CD8-positive, alpha-beta T cell (primary cell): ENCODE measurements at regions of chr17 and their contacts with region 1.

Region 1: GRCh38 chr17:49624896-49625295 is 49.2 kb downstream of the NXPH3 start:
- DNase-seq: no peak
- ATAC-seq: no peak
- H3K4me3 ChIP-seq: no peak overlapping the region
- H3K4me3 Mint-ChIP-seq: no peak overlapping the region
- H3K27ac ChIP-seq: no peak overlapping the region
- H3K27ac Mint-ChIP-seq: no peak overlapping the region
- H3K4me1 ChIP-seq: peaks cover 10% of the 10 kb centered on the region
- H3K4me1 Mint-ChIP-seq: peaks cover 37% of the 10 kb centered on the region
- H3K27me3 ChIP-seq: no peaks in the 10 kb centered on the region
- H3K27me3 Mint-ChIP-seq: no peaks in the 10 kb centered on the region
- CTCF ChIP-seq: no peak

Region 2: DNA sequence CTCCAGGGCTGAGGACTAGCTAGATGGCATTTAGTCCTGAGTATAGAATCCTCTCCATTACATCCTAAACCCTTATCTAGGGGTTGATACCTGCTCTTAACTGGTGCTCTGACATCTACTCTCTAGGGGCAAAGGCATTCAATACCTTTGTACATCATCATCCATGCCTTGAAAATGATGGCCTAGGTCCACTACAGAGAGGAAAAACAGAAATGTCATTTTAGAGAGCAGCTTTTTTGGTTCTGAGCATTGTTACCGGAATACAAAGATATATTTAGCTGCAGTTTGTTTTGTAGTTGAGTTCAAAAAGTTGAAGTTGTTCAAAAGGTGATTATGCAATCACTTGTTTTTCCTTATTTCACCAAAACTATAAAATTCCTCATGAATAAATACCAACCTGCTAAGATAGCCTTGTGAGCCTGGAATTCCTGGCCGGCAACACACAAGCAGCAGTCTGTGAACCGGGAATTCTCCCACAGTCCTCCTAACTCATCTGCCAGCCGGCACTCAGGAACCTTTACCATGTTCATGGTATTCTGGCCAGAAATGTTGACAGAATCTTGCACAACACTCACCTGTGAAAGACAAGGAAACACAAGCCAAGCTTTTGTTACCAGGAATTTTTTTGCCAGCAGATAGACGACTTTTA is 13.9 kb before region 1 on chr17:
- CTCF ChIA-PET with region 1: no interaction called
- POLR2A ChIA-PET with region 1: no interaction called
- intact Hi-C with region 1: no loop called
- DNase-seq: no peak
- ATAC-seq: no peak
- H3K4me3 ChIP-seq: no peak overlapping the region
- H3K4me3 Mint-ChIP-seq: no peak overlapping the region
- H3K27ac ChIP-seq: no peak overlapping the region
- H3K27ac Mint-ChIP-seq: peak overlapping the region; percentile 67
- H3K4me1 ChIP-seq: no peaks in the 10 kb centered on the region
- H3K4me1 Mint-ChIP-seq: peaks cover 2% of the 10 kb centered on the region
- H3K27me3 ChIP-seq: no peaks in the 10 kb centered on the region
- H3K27me3 Mint-ChIP-seq: no peaks in the 10 kb centered on the region
- CTCF ChIP-seq: no peak

Region 3: DNA sequence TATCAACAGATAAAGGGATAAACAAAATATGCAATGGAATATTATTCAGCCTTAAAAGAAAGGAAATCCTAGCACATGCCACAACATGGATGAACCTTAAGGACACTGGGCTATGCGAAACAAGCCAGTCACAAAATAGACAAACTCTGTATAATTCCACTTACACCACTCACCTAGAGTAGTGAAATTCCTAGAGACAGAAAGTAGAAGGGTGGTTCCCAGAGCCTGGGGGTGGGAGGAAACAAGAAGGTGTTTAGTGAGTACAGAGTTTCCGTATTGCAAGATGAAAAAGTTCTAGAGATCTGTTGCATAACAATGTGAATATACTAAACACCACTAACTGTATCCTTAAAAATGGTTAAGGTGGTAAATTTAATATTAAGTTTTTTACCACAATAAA is 43.0 kb after region 1 on chr17:
- CTCF ChIA-PET with region 1: no interaction called
- POLR2A ChIA-PET with region 1: no interaction called
- intact Hi-C with region 1: loop called in 1 of 2 experiments (anchors 5 kb)
- DNase-seq: peak in 1 of 9 experiments; percentile 40
- ATAC-seq: no peak
- H3K4me3 ChIP-seq: no peak overlapping the region
- H3K4me3 Mint-ChIP-seq: no peak overlapping the region
- H3K27ac ChIP-seq: no peak overlapping the region
- H3K27ac Mint-ChIP-seq: peak overlapping the region; percentile 49
- H3K4me1 ChIP-seq: peaks cover 37% of the 10 kb centered on the region
- H3K4me1 Mint-ChIP-seq: peaks cover 63% of the 10 kb centered on the region
- H3K27me3 ChIP-seq: no peaks in the 10 kb centered on the region
- H3K27me3 Mint-ChIP-seq: no peaks in the 10 kb centered on the region
- CTCF ChIP-seq: no peak